Caco-2 (cell line): ENCODE measurements at regions of chr3 and their contacts with region 1.

Region 1: DNA sequence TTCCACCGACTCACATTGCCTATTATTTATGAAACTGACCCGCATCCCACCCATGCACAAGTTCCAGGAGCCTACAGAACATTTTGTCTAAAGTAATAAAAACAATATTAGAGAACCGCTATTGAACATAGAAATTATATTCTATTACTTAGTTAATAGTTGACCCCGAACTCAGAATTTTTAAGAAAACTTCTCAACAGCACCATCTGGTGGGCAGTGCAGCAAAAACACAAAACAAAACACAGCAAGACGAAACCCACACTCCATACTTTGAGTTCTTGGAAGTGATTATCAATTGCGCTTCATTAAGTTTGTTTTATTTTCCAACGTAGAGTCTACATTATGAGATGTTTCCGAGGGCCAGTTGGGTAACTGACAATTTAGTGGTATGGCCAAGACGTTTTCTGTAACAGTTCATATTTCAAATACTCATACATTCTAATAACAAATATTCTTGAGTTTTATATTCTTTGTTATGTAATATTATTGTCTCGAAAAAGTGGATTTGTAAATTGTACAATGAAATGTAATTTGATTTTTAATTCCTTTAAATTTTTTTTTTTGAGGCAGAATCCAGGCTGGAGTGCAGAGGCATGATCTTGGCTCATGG is 24.0 kb upstream of the C3orf70 start:
- DNase-seq: peak in 1 of 2 experiments; percentile 54
- H3K4me3 ChIP-seq: no peak overlapping the region
- H3K4me3 Mint-ChIP-seq: no peak overlapping the region
- H3K27ac Mint-ChIP-seq: no peak overlapping the region
- H3K4me1 ChIP-seq: peaks cover 15% of the 10 kb centered on the region
- H3K4me1 Mint-ChIP-seq: peaks cover 7% of the 10 kb centered on the region
- H3K27me3 ChIP-seq: no peaks in the 10 kb centered on the region
- H3K27me3 Mint-ChIP-seq: no peaks in the 10 kb centered on the region
- CTCF ChIP-seq: peak; percentile 59 to 67

Region 2: GRCh38 chr3:184874709-184875644 is 301.9 kb before region 1 on chr3:
- CTCF ChIA-PET with region 1: no interaction called
- POLR2A ChIA-PET with region 1: no interaction called
- intact Hi-C with region 1: loop called (anchors 1 kb)
- DNase-seq: peak; percentile 33 to 51
- H3K4me3 ChIP-seq: no peak overlapping the region
- H3K4me3 Mint-ChIP-seq: no peak overlapping the region
- H3K27ac Mint-ChIP-seq: no peak overlapping the region
- H3K4me1 ChIP-seq: no peaks in the 10 kb centered on the region
- H3K4me1 Mint-ChIP-seq: no peaks in the 10 kb centered on the region
- H3K27me3 ChIP-seq: no peaks in the 10 kb centered on the region
- H3K27me3 Mint-ChIP-seq: no peaks in the 10 kb centered on the region
- CTCF ChIP-seq: peak; percentile 37 to 73

Region 3: DNA sequence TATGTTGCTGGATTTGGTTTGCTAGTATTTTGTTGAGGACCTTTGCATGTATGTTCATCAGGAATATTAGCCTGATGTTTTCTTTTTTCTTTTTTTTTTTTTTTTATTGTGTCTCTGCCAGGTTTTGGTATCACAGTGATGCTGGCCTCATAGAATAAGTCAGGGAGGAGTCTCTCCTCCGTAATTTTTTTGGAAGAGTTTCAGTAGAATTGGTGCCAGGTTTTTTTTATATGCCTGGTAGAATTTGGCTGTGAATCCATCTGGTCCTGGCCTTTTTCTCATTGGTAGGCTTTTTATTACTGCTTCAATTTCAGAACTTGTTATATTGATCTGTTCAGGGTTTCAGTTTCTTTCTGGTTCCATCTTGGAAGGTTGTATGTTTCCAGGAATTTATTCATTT is 199.1 kb before region 1 on chr3:
- CTCF ChIA-PET with region 1: no interaction called
- POLR2A ChIA-PET with region 1: no interaction called
- intact Hi-C with region 1: loop called (anchors 10 kb)
- DNase-seq: no peak
- H3K4me3 ChIP-seq: no peak overlapping the region
- H3K4me3 Mint-ChIP-seq: no peak overlapping the region
- H3K27ac Mint-ChIP-seq: no peak overlapping the region
- H3K4me1 ChIP-seq: no peaks in the 10 kb centered on the region
- H3K4me1 Mint-ChIP-seq: no peaks in the 10 kb centered on the region
- H3K27me3 ChIP-seq: no peaks in the 10 kb centered on the region
- H3K27me3 Mint-ChIP-seq: no peaks in the 10 kb centered on the region
- CTCF ChIP-seq: no peak

Region 4: DNA sequence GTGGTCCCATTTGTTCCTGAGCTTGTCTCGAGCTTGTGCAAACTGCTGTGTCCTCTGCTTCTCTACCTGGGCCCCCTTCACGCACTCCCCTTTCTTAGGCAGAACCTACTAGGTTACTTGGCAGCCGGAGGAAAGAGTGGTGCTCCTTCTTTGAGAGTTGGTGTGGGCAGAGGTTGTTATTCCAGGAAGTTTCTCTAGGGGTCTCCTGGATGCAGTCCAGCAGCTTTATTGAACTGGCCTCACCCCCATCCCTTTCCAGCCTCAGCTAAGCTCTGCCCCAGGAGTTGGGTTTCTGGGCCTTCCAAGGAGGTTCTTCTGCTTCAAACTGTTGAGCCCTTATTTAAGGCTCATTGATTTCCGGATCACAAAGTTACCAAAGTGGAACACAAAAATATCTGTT is 127.1 kb before region 1 on chr3:
- CTCF ChIA-PET with region 1: interaction called, 3 read pairs
- POLR2A ChIA-PET with region 1: no interaction called
- intact Hi-C with region 1: loop called (anchors 1 kb)
- DNase-seq: peak in 1 of 2 experiments; percentile 14
- H3K4me3 ChIP-seq: no peak overlapping the region
- H3K4me3 Mint-ChIP-seq: no peak overlapping the region
- H3K27ac Mint-ChIP-seq: no peak overlapping the region
- H3K4me1 ChIP-seq: no peaks in the 10 kb centered on the region
- H3K4me1 Mint-ChIP-seq: no peaks in the 10 kb centered on the region
- H3K27me3 ChIP-seq: no peaks in the 10 kb centered on the region
- H3K27me3 Mint-ChIP-seq: no peaks in the 10 kb centered on the region
- CTCF ChIP-seq: peak in 1 of 2 experiments; percentile 28

Region 5: DNA sequence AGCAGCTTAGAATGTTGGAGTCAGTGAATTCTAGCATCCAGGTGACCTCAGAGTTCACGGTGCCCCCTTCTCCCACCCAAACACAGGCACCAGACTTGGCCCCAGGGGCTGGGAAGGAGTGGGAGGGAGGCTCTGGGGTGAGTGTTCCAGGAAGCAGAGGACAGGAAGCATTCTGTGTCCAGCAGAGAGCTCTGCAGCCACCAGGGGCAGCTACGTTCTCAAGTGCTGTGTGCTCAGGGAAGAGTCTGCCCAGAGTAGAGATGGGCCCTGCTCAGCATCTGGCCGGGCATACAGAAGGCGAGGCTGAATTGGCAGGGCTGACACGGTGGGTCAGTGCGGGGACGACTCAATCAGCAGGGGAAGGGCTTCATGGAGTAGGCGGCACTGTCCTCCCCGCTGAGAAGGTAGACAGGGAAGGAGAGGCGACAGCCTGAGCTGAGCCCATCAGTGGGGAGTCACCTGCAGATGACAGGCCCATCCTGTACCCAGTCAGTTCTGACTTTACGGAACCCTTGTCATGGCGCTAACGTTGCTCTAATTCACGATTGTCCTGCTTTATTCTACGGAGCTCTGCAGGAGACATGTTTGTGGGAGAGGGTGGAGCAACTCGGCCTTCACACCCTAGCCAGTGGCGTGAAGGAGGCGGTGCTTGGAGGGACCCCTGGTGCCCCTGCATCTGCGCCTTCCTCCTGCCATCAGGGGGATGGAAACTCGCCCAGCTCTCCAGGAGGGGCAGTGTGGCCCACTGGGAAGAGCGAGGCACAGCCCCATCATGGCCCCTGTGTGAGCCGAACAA is 106.2 kb before region 1 on chr3:
- CTCF ChIA-PET with region 1: interaction called, 9 read pairs
- POLR2A ChIA-PET with region 1: no interaction called
- intact Hi-C with region 1: loop called (anchors 1 kb)
- DNase-seq: peak in 1 of 2 experiments; percentile 45
- H3K4me3 ChIP-seq: no peak overlapping the region
- H3K4me3 Mint-ChIP-seq: no peak overlapping the region
- H3K27ac Mint-ChIP-seq: no peak overlapping the region
- H3K4me1 ChIP-seq: no peaks in the 10 kb centered on the region
- H3K4me1 Mint-ChIP-seq: peaks cover 6% of the 10 kb centered on the region
- H3K27me3 ChIP-seq: no peaks in the 10 kb centered on the region
- H3K27me3 Mint-ChIP-seq: no peaks in the 10 kb centered on the region
- CTCF ChIP-seq: peak; percentile 22 to 45

Region 6: DNA sequence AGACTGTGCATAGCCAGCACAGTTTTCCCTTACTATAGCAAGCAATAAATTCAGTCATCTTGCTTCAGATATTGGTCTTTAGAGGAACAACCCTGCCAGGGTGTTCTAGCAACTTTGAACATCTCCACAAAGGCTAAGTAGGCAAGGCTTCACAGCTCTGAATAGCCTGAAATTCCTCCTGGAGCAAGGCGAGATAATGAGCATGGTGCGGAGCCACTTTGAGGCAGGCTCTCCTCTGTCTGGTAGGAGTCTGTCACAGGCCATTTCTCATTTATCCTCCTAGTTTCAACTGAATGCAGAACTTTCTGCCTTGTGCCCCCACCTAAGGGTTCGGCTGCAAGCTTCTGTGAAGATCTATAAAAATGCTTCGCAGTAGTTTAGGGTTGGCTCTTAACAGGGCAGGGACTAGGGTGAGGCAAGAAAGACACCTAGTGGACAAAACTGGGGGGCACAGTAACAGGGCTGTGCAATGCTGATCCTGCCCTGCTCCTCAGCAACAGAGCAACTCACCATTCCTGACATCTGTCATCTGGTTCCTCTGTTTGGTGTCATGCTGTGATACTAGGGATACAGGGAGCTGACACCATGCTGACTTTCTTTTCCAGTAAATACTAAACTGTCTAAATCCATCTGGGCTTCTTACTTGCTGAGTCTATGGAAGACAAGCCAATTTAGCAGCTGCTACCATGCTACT is 93.6 kb after region 1 on chr3:
- CTCF ChIA-PET with region 1: no interaction called
- POLR2A ChIA-PET with region 1: no interaction called
- intact Hi-C with region 1: loop called (anchors 1 kb)
- DNase-seq: peak; percentile 64 to 70
- H3K4me3 ChIP-seq: no peak overlapping the region
- H3K4me3 Mint-ChIP-seq: no peak overlapping the region
- H3K27ac Mint-ChIP-seq: no peak overlapping the region
- H3K4me1 ChIP-seq: peaks cover 14% of the 10 kb centered on the region
- H3K4me1 Mint-ChIP-seq: peaks cover 20% of the 10 kb centered on the region
- H3K27me3 ChIP-seq: no peaks in the 10 kb centered on the region
- H3K27me3 Mint-ChIP-seq: no peaks in the 10 kb centered on the region
- CTCF ChIP-seq: peak; percentile 69 to 83